T-cell (primary cell): ENCODE measurements at regions of chr9 and their contacts with region 1.

Region 1: GRCh38 chr9:105881654-105882349 is 187.5 kb downstream of the TMEM38B start:
- DNase-seq: peak in 31 of 35 experiments; percentile 4 to 73 (median 43)
- ATAC-seq: peak in 3 of 4 experiments; percentile 47 to 54 (median 51)
- H3K4me3 ChIP-seq: no peak overlapping the region
- H3K4me3 Mint-ChIP-seq: no peak overlapping the region
- H3K27ac ChIP-seq: no peak overlapping the region
- H3K27ac Mint-ChIP-seq: no peak overlapping the region
- H3K4me1 ChIP-seq: no peaks in the 10 kb centered on the region
- H3K4me1 Mint-ChIP-seq: peaks cover 3 to 10% (median 8%) of the 10 kb centered on the region in 3 donors
- H3K27me3 ChIP-seq: no peaks in the 10 kb centered on the region
- H3K27me3 Mint-ChIP-seq: peaks cover 0 to 8% of the 10 kb centered on the region in 2 donors

Region 2: DNA sequence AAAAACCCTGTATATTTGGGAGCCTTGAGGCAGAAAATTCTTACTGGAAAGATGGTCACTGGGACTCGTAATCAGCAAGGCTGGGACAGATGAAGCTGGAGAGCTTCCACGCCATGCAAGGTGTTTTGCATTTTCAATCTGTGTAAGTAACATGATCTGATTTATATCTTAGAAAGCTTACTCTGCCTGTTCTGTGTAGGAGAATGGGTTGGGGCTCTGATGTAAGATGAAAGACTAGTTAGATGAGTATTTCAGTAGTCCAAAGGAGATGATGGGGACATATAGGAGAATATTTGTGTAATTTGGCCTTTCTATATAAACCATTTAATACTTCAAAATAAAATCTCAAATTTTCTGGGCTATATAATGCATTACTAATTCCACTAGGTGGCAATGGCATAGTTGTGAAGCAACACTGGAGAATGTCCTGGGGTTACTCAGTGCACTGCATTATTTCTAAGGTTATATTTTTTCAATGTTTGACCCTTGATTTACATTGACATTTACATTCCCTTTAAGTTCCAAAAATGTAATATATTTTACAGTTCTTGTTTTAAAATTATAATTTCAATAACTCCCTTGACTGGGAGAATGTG is 455.9 kb before region 1 on chr9:
- CTCF ChIA-PET with region 1: no interaction called
- POLR2A ChIA-PET with region 1: no interaction called
- DNase-seq: no peak
- ATAC-seq: no peak
- H3K4me3 ChIP-seq: no peak overlapping the region
- H3K4me3 Mint-ChIP-seq: no peak overlapping the region
- H3K27ac ChIP-seq: no peak overlapping the region
- H3K27ac Mint-ChIP-seq: no peak overlapping the region
- H3K4me1 ChIP-seq: no peaks in the 10 kb centered on the region
- H3K4me1 Mint-ChIP-seq: no peaks in the 10 kb centered on the region
- H3K27me3 ChIP-seq: peaks cover 0 to 5% of the 10 kb centered on the region in 2 experiments
- H3K27me3 Mint-ChIP-seq: peaks cover 0 to 2% of the 10 kb centered on the region in 2 donors

Region 3: GRCh38 chr9:105842023-105842644 is 39.7 kb before region 1 on chr9:
- CTCF ChIA-PET with region 1: interaction called, 28 to 29 read pairs
- POLR2A ChIA-PET with region 1: interaction called in 1 of 2 experiments, 3 read pairs
- DNase-seq: peak in 6 of 35 experiments; percentile 5 to 39 (median 11)
- ATAC-seq: no peak
- H3K4me3 ChIP-seq: no peak overlapping the region
- H3K4me3 Mint-ChIP-seq: no peak overlapping the region
- H3K27ac ChIP-seq: no peak overlapping the region
- H3K27ac Mint-ChIP-seq: no peak overlapping the region
- H3K4me1 ChIP-seq: no peaks in the 10 kb centered on the region
- H3K4me1 Mint-ChIP-seq: no peaks in the 10 kb centered on the region
- H3K27me3 ChIP-seq: no peaks in the 10 kb centered on the region
- H3K27me3 Mint-ChIP-seq: peaks cover 0 to 1% of the 10 kb centered on the region in 2 donors